ENCODE measurements at regions of chr11 and their contacts with region 1.

Region 1: DNA sequence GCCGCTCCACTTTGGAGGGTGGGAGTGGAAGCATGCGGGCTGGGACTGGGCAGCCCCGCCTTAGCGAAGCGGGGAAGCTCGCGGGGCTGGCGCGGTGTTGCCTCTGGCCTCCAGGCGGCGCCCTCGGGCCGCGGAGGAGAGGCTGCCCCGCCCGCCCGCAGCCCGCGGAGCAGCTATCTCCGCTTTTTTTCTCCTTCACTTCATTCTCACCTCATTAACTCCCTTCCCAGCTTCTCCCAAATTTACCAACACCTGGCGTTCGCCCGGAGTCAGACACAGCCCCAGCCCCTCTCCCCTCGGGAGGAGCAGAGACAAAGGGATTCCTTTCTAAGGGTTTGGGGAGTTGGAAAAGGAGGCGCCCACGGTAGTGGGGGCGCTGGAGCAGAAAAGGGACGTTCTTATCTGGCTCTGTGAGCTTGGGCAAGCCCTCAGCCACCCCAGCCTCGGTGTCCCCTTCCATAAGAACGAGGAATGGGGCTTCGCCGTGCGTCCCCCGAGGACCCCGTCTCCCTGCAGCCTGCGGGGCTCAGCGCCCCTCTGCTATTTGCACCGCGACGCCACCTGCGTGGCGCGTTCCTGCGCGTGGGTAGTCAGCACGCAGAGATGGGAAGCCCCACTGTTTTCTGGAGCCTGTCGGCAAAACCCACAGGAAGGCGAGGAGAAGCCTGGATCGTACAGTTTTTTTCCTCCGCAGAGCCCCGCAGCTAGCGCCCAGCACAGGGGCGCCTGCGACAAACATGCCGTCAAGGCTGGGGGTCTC is 1.5 kb upstream of the WNT11 start:
- DNase-seq: peak; percentile 80
- ATAC-seq: peak; percentile 79
- H3K4me3 Mint-ChIP-seq: peak overlapping the region; percentile 69
- H3K27ac Mint-ChIP-seq: no peak overlapping the region
- H3K4me1 Mint-ChIP-seq: peaks cover 11% of the 10 kb centered on the region
- H3K27me3 Mint-ChIP-seq: peaks cover 55% of the 10 kb centered on the region
- CTCF ChIP-seq: peak; percentile 97

Region 2: GRCh38 chr11:76152086-76152681 is 55.6 kb before region 1 on chr11:
- CTCF ChIA-PET with region 1: interaction called, 28 read pairs
- POLR2A ChIA-PET with region 1: no interaction called
- intact Hi-C with region 1: no loop called
- DNase-seq: peak; percentile 95
- ATAC-seq: peak; percentile 98
- H3K4me3 Mint-ChIP-seq: peak overlapping the region; percentile 61
- H3K27ac Mint-ChIP-seq: peak overlapping the region; percentile 63
- H3K4me1 Mint-ChIP-seq: peaks cover 25% of the 10 kb centered on the region
- H3K27me3 Mint-ChIP-seq: peaks cover 9% of the 10 kb centered on the region
- CTCF ChIP-seq: peak; percentile 96

Region 3: GRCh38 chr11:76248210-76248609 is 40.4 kb after region 1 on chr11:
- CTCF ChIA-PET with region 1: interaction called, 40 read pairs
- POLR2A ChIA-PET with region 1: no interaction called
- intact Hi-C with region 1: no loop called
- DNase-seq: peak; percentile 14
- ATAC-seq: no peak
- H3K4me3 Mint-ChIP-seq: no peak overlapping the region
- H3K27ac Mint-ChIP-seq: no peak overlapping the region
- H3K4me1 Mint-ChIP-seq: no peaks in the 10 kb centered on the region
- H3K27me3 Mint-ChIP-seq: no peaks in the 10 kb centered on the region
- CTCF ChIP-seq: no peak

Region 4: DNA sequence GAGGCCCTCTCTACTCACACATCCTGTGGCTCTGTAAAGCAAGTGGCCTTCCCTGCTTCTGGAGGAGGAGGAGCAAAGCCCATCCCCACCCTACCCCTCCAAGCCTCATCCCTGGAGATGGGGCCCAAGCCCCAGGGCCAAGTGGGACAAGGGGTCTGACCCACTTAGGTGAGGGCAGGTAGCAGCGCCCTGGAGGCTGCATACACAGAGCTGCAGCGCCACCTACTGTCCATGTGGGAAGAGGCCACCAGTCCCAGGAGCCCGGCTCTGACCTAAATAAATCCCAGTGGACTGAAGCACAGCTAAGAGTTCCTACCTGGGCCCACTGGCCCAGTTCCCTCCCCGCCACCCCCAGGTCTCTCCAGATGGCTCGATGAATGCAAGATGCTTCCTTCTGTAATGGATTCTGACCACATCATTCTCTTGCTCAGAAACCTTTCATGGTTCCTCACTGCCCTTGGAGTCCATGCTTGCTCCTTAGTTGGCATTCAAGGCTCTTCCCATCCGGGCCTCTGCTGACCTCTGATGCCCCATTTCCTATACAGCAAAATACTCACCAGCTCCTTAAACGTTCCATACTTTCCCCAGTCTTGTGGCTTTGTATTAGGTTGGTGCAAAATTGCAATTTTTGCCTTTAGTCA is 111.0 kb after region 1 on chr11:
- CTCF ChIA-PET with region 1: interaction called, 214 read pairs
- POLR2A ChIA-PET with region 1: interaction called, 4 read pairs
- intact Hi-C with region 1: loop called (anchors 2 kb)
- DNase-seq: peak; percentile 91
- ATAC-seq: peak; percentile 98
- H3K4me3 Mint-ChIP-seq: no peak overlapping the region
- H3K27ac Mint-ChIP-seq: no peak overlapping the region
- H3K4me1 Mint-ChIP-seq: no peaks in the 10 kb centered on the region
- H3K27me3 Mint-ChIP-seq: peaks cover 37% of the 10 kb centered on the region
- CTCF ChIP-seq: peak; percentile 88

Region 5: DNA sequence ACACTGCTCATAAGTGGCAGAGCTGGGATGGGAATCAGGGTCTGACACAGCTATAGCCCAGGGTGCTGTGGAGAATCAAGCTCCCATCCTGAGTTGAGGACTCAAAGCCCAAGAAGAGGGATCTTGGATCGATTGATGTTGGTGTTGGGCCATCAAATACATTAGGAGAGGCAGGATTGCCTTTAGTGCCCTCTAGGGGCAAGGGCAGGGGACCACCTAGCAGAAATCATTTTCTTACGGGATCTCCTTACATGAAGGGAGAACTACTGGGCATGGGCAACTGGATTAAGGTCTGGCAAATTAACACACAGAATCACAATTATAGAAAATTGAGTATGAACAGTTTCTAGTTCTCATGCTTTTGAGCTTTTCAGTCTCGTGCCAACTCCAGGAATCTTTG is 212.1 kb after region 1 on chr11:
- CTCF ChIA-PET with region 1: interaction called, 13 read pairs
- POLR2A ChIA-PET with region 1: no interaction called
- intact Hi-C with region 1: no loop called
- DNase-seq: peak; percentile 31
- ATAC-seq: peak; percentile 48
- H3K4me3 Mint-ChIP-seq: no peak overlapping the region
- H3K27ac Mint-ChIP-seq: no peak overlapping the region
- H3K4me1 Mint-ChIP-seq: peaks cover 10% of the 10 kb centered on the region
- H3K27me3 Mint-ChIP-seq: peaks cover 5% of the 10 kb centered on the region
- CTCF ChIP-seq: peak; percentile 54

Measured in activated CD8-positive, alpha-beta T cell treated with anti-CD3 and anti-CD28 coated beads for 36 hours (primary cell).